CD8-positive, alpha-beta T cell (primary cell): ENCODE measurements at regions of chr2 and their contacts with region 1.

Region 1: GRCh38 chr2:67384123-67384822 is 12.9 kb upstream of the ETAA1 start:
- DNase-seq: no peak
- ATAC-seq: no peak
- H3K4me3 ChIP-seq: no peak overlapping the region
- H3K4me3 Mint-ChIP-seq: no peak overlapping the region
- H3K27ac ChIP-seq: no peak overlapping the region
- H3K27ac Mint-ChIP-seq: no peak overlapping the region
- H3K4me1 ChIP-seq: no peaks in the 10 kb centered on the region
- H3K4me1 Mint-ChIP-seq: no peaks in the 10 kb centered on the region
- H3K27me3 ChIP-seq: no peaks in the 10 kb centered on the region
- H3K27me3 Mint-ChIP-seq: no peaks in the 10 kb centered on the region
- CTCF ChIP-seq: no peak

Region 2: DNA sequence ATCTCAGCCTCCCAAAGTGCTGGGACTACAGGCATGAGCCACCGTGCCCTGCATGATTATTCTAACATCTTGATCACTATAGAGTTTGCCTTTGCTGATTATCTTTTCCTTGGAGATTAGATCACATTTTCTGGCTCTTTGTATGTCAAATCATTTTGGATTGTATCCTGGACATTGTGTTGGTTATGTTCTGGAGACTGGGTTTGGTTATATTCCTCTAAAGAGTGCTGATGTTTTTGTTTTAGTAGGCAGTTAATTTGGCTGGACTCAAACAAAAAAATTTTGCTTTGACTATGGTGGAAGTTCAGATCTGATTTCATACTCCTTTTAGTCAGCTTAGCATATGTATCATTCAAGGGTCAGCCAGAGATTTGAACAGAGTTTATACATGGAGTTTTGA is 39.2 kb after region 1 on chr2:
- CTCF ChIA-PET with region 1: no interaction called
- POLR2A ChIA-PET with region 1: no interaction called
- intact Hi-C with region 1: loop called in 1 of 2 experiments (anchors 5 kb)
- DNase-seq: no peak
- ATAC-seq: no peak
- H3K4me3 ChIP-seq: no peak overlapping the region
- H3K4me3 Mint-ChIP-seq: no peak overlapping the region
- H3K27ac ChIP-seq: no peak overlapping the region
- H3K27ac Mint-ChIP-seq: no peak overlapping the region
- H3K4me1 ChIP-seq: no peaks in the 10 kb centered on the region
- H3K4me1 Mint-ChIP-seq: no peaks in the 10 kb centered on the region
- H3K27me3 ChIP-seq: no peaks in the 10 kb centered on the region
- H3K27me3 Mint-ChIP-seq: no peaks in the 10 kb centered on the region
- CTCF ChIP-seq: no peak

Region 3: DNA sequence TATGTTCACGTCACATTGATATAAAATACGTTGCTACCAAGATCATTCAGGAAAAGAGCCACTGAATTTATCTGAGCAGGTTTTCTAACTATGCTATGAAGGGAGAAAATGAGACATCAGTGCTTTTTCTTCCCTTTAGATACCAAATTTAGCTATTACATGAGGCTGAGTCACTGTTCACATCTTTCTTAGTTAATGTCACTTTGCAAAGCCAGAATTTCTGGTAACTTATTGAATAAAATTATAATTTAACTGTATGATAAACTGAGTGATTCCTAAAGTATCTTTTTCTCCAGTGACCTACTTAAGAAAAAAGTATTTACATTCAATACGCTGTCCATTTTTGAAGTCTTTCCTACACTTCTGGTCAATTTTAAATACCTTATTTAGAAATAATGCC is 655.8 kb after region 1 on chr2:
- CTCF ChIA-PET with region 1: no interaction called
- POLR2A ChIA-PET with region 1: no interaction called
- intact Hi-C with region 1: no loop called
- DNase-seq: no peak
- ATAC-seq: no peak
- H3K4me3 ChIP-seq: no peak overlapping the region
- H3K4me3 Mint-ChIP-seq: no peak overlapping the region
- H3K27ac ChIP-seq: no peak overlapping the region
- H3K27ac Mint-ChIP-seq: no peak overlapping the region
- H3K4me1 ChIP-seq: no peaks in the 10 kb centered on the region
- H3K4me1 Mint-ChIP-seq: peaks cover 2% of the 10 kb centered on the region
- H3K27me3 ChIP-seq: no peaks in the 10 kb centered on the region
- H3K27me3 Mint-ChIP-seq: no peaks in the 10 kb centered on the region
- CTCF ChIP-seq: no peak

Region 4: GRCh38 chr2:69073928-69074570 is 1689.8 kb after region 1 on chr2:
- CTCF ChIA-PET with region 1: no interaction called
- POLR2A ChIA-PET with region 1: no interaction called
- intact Hi-C with region 1: no loop called
- DNase-seq: no peak
- ATAC-seq: no peak
- H3K4me3 ChIP-seq: no peak overlapping the region
- H3K4me3 Mint-ChIP-seq: no peak overlapping the region
- H3K27ac ChIP-seq: no peak overlapping the region
- H3K27ac Mint-ChIP-seq: no peak overlapping the region
- H3K4me1 ChIP-seq: no peaks in the 10 kb centered on the region
- H3K4me1 Mint-ChIP-seq: no peaks in the 10 kb centered on the region
- H3K27me3 ChIP-seq: no peaks in the 10 kb centered on the region
- H3K27me3 Mint-ChIP-seq: peaks cover 3% of the 10 kb centered on the region
- CTCF ChIP-seq: no peak